CD8-positive, alpha-beta memory T cell (primary cell): ENCODE measurements at regions of chr10 and their contacts with region 1.

Region 1: DNA sequence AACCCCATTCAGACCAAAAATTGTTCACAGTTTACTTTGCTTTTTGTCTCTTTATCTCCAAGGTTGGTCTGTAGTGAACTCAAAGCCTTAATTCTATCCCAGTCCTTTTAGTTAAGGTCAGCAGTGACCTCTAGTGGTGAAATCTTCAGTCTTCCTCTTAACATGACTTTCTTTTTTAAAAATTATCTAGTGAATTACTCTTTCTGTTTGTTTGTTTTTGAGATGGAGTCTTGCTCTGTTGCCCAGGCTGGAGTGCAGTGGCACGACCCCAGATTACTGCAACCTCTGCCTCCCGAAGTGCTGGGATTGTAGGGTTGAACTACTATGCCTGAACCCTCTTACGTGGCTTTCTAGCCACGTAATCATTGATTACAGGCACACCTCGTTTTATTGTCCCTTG is 25.0 kb downstream of the ZNF487 start:
- DNase-seq: peak in 3 of 5 donors; percentile 8 to 67 (median 66)
- H3K4me3 ChIP-seq: no peak overlapping the region
- H3K4me3 Mint-ChIP-seq: peak overlapping the region in 2 of 7 donors; percentile 2 to 23
- H3K27ac ChIP-seq: no peak overlapping the region
- H3K27ac Mint-ChIP-seq: peak overlapping the region in 5 of 8 donors; percentile 5 to 74 (median 24)
- H3K4me1 ChIP-seq: peaks cover under 1% of the 10 kb centered on the region
- H3K4me1 Mint-ChIP-seq: peaks cover 8 to 19% (median 18%) of the 10 kb centered on the region in 3 donors
- H3K27me3 ChIP-seq: no peaks in the 10 kb centered on the region
- H3K27me3 Mint-ChIP-seq: no peaks in the 10 kb centered on the region

Region 2: GRCh38 chr10:43265799-43266721 is 195.9 kb before region 1 on chr10:
- CTCF ChIA-PET with region 1: interaction called, 29 read pairs
- POLR2A ChIA-PET with region 1: no interaction called
- DNase-seq: peak in 3 of 5 donors; percentile 35 to 76 (median 44)
- H3K4me3 ChIP-seq: peak overlapping the region; percentile 51
- H3K4me3 Mint-ChIP-seq: peak overlapping the region; percentile 85 to 91 (median 88)
- H3K27ac ChIP-seq: no peak overlapping the region
- H3K27ac Mint-ChIP-seq: peak overlapping the region in 4 of 8 donors; percentile 14 to 80 (median 76)
- H3K4me1 ChIP-seq: peaks cover 7% of the 10 kb centered on the region
- H3K4me1 Mint-ChIP-seq: peaks cover 4 to 29% (median 8%) of the 10 kb centered on the region in 3 donors
- H3K27me3 ChIP-seq: peaks cover 21% of the 10 kb centered on the region
- H3K27me3 Mint-ChIP-seq: peaks cover 27 to 41% of the 10 kb centered on the region in 2 donors

Region 3: GRCh38 chr10:43292755-43293676 is 168.9 kb before region 1 on chr10:
- CTCF ChIA-PET with region 1: interaction called, 14 read pairs
- POLR2A ChIA-PET with region 1: no interaction called
- DNase-seq: peak in 4 of 5 donors; percentile 17 to 62 (median 36)
- H3K4me3 ChIP-seq: peak overlapping the region; percentile 8
- H3K4me3 Mint-ChIP-seq: peak overlapping the region; percentile 37 to 74 (median 69)
- H3K27ac ChIP-seq: no peak overlapping the region
- H3K27ac Mint-ChIP-seq: peak overlapping the region; percentile 80 to 93 (median 90)
- H3K4me1 ChIP-seq: peaks cover 43% of the 10 kb centered on the region
- H3K4me1 Mint-ChIP-seq: peaks cover 60 to 82% (median 80%) of the 10 kb centered on the region in 3 donors
- H3K27me3 ChIP-seq: no peaks in the 10 kb centered on the region
- H3K27me3 Mint-ChIP-seq: no peaks in the 10 kb centered on the region

Region 4: GRCh38 chr10:43396928-43397624 is 64.9 kb before region 1 on chr10:
- CTCF ChIA-PET with region 1: interaction called, 17 read pairs
- POLR2A ChIA-PET with region 1: interaction called, 7 read pairs
- DNase-seq: peak; percentile 67 to 83 (median 78)
- H3K4me3 ChIP-seq: peak overlapping the region; percentile 65
- H3K4me3 Mint-ChIP-seq: peak overlapping the region; percentile 92 to 96 (median 95)
- H3K27ac ChIP-seq: peak overlapping the region; percentile 85
- H3K27ac Mint-ChIP-seq: peak overlapping the region; percentile 91 to 100 (median 98)
- H3K4me1 ChIP-seq: peaks cover 80% of the 10 kb centered on the region
- H3K4me1 Mint-ChIP-seq: peaks cover 77 to 92% (median 90%) of the 10 kb centered on the region in 3 donors
- H3K27me3 ChIP-seq: no peaks in the 10 kb centered on the region
- H3K27me3 Mint-ChIP-seq: no peaks in the 10 kb centered on the region

Region 5: GRCh38 chr10:43491855-43492254 is 29.9 kb after region 1 on chr10:
- CTCF ChIA-PET with region 1: no interaction called
- POLR2A ChIA-PET with region 1: no interaction called
- DNase-seq: no peak
- H3K4me3 ChIP-seq: no peak overlapping the region
- H3K4me3 Mint-ChIP-seq: no peak overlapping the region
- H3K27ac ChIP-seq: no peak overlapping the region
- H3K27ac Mint-ChIP-seq: no peak overlapping the region
- H3K4me1 ChIP-seq: no peaks in the 10 kb centered on the region
- H3K4me1 Mint-ChIP-seq: no peaks in the 10 kb centered on the region
- H3K27me3 ChIP-seq: no peaks in the 10 kb centered on the region
- H3K27me3 Mint-ChIP-seq: peaks cover 0 to 9% of the 10 kb centered on the region in 2 donors

Region 6: DNA sequence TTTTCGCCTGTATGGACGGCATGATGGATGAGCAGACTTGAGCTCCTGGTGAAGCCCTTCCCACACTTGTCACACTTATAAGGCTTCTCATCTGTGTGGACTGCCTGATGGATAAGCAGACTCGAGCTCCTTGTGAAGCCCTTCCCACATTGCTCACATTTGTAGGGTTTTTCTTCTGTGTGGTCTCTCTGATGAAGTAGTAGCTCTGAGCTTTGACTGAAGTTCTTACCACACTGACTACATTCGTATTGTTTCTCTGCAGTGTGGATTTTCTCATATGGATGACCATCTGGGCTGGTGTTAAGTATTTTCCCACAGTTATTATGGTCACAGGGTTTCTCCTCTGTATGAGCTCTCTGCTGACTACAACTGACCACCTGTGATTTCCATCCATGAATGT is 95.3 kb after region 1 on chr10:
- CTCF ChIA-PET with region 1: no interaction called
- POLR2A ChIA-PET with region 1: no interaction called
- DNase-seq: no peak
- H3K4me3 ChIP-seq: no peak overlapping the region
- H3K4me3 Mint-ChIP-seq: no peak overlapping the region
- H3K27ac ChIP-seq: no peak overlapping the region
- H3K27ac Mint-ChIP-seq: no peak overlapping the region
- H3K4me1 ChIP-seq: no peaks in the 10 kb centered on the region
- H3K4me1 Mint-ChIP-seq: no peaks in the 10 kb centered on the region
- H3K27me3 ChIP-seq: no peaks in the 10 kb centered on the region
- H3K27me3 Mint-ChIP-seq: peaks cover 0 to 1% of the 10 kb centered on the region in 2 donors

Region 7: DNA sequence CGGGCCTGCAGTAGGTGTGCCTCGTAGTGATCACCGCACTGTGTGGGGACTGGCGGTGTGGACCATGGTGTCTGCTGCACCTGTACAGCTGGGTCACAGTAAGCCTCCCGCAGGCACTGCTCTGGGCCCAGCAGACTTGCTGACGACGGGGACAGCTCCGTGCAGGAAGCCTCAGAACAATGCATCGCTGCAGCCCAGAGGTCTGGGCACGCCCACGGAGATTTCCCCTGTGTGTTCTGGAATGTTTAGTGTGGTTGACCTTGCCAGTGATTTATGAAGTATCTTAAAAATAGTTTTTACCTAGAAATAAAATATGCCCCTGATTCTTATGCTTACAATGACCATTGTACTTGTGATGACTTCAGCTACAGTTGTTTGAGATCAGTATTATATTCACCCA is 245.8 kb after region 1 on chr10:
- CTCF ChIA-PET with region 1: no interaction called
- POLR2A ChIA-PET with region 1: no interaction called
- DNase-seq: no peak
- H3K4me3 ChIP-seq: no peak overlapping the region
- H3K4me3 Mint-ChIP-seq: no peak overlapping the region
- H3K27ac ChIP-seq: no peak overlapping the region
- H3K27ac Mint-ChIP-seq: no peak overlapping the region
- H3K4me1 ChIP-seq: no peaks in the 10 kb centered on the region
- H3K4me1 Mint-ChIP-seq: no peaks in the 10 kb centered on the region
- H3K27me3 ChIP-seq: no peaks in the 10 kb centered on the region
- H3K27me3 Mint-ChIP-seq: peaks cover 0 to 1% of the 10 kb centered on the region in 2 donors